ENCODE measurements at regions of chr15 and their contacts with region 1.

Region 1: DNA sequence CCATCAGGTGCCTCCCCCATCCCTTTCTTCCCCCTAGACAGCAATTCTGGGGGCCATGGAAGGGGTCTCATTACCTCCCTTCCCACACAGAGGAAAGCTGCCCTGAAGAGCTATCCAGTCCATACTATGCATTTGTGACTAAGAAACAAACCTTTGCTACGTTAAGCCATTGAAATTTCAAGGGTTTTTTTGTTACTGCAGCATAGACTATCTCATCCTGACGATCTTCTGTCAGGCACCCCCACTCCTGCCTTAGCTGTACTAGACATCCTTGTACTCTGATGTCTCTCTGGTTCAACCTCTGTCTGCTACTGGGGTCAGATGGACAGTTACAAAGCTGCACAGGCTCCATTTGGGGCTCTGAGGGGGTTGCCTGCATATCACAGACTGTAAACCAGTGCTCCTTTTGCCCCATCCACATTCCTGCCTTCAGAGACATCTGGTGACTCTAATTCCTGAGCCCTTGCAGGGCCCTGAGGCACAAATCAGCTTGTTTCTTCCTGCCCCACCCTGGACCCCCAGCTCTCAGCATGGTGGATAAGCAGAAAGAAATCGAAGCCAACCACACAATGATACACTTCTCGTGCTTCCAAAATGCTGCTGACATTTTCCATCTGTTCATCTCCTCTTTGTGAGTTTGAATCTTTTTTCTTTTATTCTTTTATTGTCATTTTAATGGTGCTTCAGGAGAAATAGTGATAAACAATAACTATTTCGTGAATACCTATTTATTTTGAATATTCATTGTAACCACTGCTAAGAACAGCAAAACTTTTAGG is 21.6 kb upstream of the NSMCE3 start:
- DNase-seq: no peak
- ATAC-seq: no peak
- H3K4me3 ChIP-seq: no peak overlapping the region
- H3K4me3 Mint-ChIP-seq: no peak overlapping the region
- H3K27ac ChIP-seq: no peak overlapping the region
- H3K27ac Mint-ChIP-seq: peak overlapping the region in 1 of 9 donors; percentile 37
- H3K4me1 ChIP-seq: no peaks in the 10 kb centered on the region
- H3K4me1 Mint-ChIP-seq: no peaks in the 10 kb centered on the region
- H3K27me3 ChIP-seq: no peaks in the 10 kb centered on the region
- H3K27me3 Mint-ChIP-seq: peaks cover 4 to 17% (median 7%) of the 10 kb centered on the region in 5 donors

Region 2: DNA sequence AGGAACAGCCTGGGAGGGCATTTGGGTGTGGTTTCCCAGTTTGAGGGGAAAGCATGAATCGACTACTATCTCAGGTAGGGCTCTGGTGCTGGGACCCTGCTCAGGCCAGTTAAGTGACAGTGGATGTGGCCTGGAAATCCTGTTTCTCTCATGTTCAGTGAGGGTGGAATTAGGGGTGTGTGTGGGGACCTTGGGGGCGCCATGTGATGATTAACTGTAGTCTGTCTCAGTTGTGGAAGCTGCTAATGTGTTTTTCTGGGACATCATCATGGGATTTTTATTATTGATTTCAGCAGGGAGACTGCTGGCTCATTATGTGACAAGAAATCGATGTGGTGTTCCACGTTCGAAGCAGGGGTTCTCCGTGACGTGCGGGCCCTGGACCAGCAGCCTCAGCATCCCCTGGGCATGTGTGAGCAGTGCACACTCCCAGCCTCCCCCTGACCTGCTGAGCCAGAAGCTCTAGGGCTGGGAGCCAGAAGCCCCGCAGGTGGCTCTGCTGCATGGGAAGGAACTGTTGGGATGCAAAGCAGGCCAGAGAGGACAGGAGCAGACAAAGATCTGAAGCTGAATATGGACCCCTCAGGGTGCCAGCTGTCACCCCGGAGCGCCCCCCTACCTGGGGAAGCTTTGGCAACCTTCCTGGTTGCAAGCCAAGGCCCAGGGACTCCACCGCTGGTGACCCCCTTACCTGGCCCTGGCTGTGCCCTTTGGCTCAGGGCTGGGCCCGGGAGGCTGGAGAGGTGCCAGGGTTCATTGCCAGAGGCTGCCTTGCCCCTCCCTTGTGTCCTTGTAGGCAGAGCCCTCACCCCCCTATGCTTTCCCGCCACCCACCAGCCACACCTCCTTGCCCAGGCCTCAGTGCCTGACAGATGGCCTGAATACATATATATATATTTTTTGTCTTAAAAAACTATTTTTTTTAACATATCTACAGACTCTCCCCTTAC is 255.6 kb before region 1 on chr15:
- CTCF ChIA-PET with region 1: no interaction called
- POLR2A ChIA-PET with region 1: no interaction called
- intact Hi-C with region 1: no loop called
- DNase-seq: no peak
- ATAC-seq: no peak
- H3K4me3 ChIP-seq: no peak overlapping the region
- H3K4me3 Mint-ChIP-seq: no peak overlapping the region
- H3K27ac ChIP-seq: no peak overlapping the region
- H3K27ac Mint-ChIP-seq: peak overlapping the region in 2 of 9 donors; percentile 16 to 31
- H3K4me1 ChIP-seq: peaks cover 19 to 32% of the 10 kb centered on the region in 2 donors
- H3K4me1 Mint-ChIP-seq: peaks cover 23 to 92% (median 81%) of the 10 kb centered on the region in 7 donors
- H3K27me3 ChIP-seq: no peaks in the 10 kb centered on the region
- H3K27me3 Mint-ChIP-seq: no peaks in the 10 kb centered on the region

Region 3: GRCh38 chr15:29233566-29233965 is 57.7 kb before region 1 on chr15:
- CTCF ChIA-PET with region 1: no interaction called
- POLR2A ChIA-PET with region 1: no interaction called
- intact Hi-C with region 1: loop called in 1 of 2 experiments (anchors 10 kb)
- DNase-seq: no peak
- ATAC-seq: no peak
- H3K4me3 ChIP-seq: no peak overlapping the region
- H3K4me3 Mint-ChIP-seq: no peak overlapping the region
- H3K27ac ChIP-seq: no peak overlapping the region
- H3K27ac Mint-ChIP-seq: no peak overlapping the region
- H3K4me1 ChIP-seq: no peaks in the 10 kb centered on the region
- H3K4me1 Mint-ChIP-seq: no peaks in the 10 kb centered on the region
- H3K27me3 ChIP-seq: no peaks in the 10 kb centered on the region
- H3K27me3 Mint-ChIP-seq: peaks cover 20 to 42% (median 29%) of the 10 kb centered on the region in 5 donors

Region 4: DNA sequence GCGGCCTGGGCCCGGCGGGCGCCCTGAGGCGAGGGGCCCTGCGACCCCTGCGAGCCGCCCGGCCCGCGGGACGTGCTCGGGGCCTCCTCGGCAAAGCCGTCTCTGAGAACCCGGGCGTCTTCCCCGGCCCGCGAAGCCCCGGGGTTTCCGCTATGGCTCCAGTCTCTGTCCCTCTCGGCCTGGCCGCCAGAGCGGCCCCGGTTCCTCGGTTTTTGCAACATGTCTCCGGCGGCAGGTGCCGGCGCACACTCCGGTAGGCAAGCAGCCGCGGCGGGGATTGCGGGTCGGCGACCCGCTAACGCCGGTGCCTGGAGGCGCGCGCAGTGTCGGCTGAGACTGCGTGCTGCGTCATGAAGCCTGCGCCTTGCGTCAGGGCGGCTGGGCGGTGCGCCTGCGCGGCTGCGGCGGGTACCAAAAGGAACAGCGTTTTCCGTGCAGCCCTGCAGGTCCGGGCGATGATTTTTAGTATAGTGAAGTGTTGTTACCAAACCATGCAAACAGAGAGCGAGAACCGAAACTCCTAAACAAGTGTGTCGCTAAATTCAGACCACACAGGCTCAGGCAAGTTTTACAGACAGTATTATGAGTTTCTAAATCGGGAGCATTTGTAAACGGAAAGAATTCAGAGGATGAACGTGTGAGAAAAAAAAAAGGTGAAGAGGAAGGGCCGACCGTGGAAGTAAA is 21.6 kb before region 1 on chr15 and contains the start of gene NSMCE3:
- CTCF ChIA-PET with region 1: no interaction called
- POLR2A ChIA-PET with region 1: no interaction called
- intact Hi-C with region 1: no loop called
- DNase-seq: peak; percentile 90 to 94 (median 92)
- ATAC-seq: peak; percentile 93
- H3K4me3 ChIP-seq: peak within 1 kb of the TSS; percentile 96
- H3K4me3 Mint-ChIP-seq: peak within 1 kb of the TSS; percentile 90 to 100 (median 99)
- H3K27ac ChIP-seq: peak within 1 kb of the TSS; percentile 97
- H3K27ac Mint-ChIP-seq: peak within 1 kb of the TSS; percentile 98 to 100 (median 99)
- H3K4me1 ChIP-seq: peaks cover 13 to 29% of the 10 kb centered on the region in 2 donors
- H3K4me1 Mint-ChIP-seq: peaks cover 28 to 59% (median 52%) of the 10 kb centered on the region in 7 donors
- H3K27me3 ChIP-seq: no peaks in the 10 kb centered on the region
- H3K27me3 Mint-ChIP-seq: peaks cover 0 to 6% (median 0%) of the 10 kb centered on the region in 5 donors
- total RNA-seq, gene NSMCE3: 11.0 to 39.2 (median 18.5) TPM

Measured in naive thymus-derived CD4-positive, alpha-beta T cell (primary cell).